Heart left ventricle (tissue), 16 donors: ENCODE measurements at regions of chr15 and their contacts with region 1.

Region 1: GRCh38 chr15:88897456-88898194 is 2.3 kb upstream of the HAPLN3 start:
- DNase-seq: peak; percentile 84 to 92 (median 90)
- ATAC-seq: peak; percentile 77 to 95 (median 88)
- H3K4me3 ChIP-seq: peak overlapping the region in 4 of 12 donors; percentile 5 to 28 (median 11)
- H3K27ac ChIP-seq: peak overlapping the region in 11 of 12 donors; percentile 68 to 87 (median 81)
- H3K4me1 ChIP-seq: peaks cover 5 to 72% (median 45%) of the 10 kb centered on the region in 12 donors
- H3K27me3 ChIP-seq: peaks cover 0 to 8% (median 0%) of the 10 kb centered on the region in 9 donors
- CTCF ChIP-seq: peak; percentile 47 to 88 (median 74)
- POLR2A ChIP-seq: no peak

Region 2: GRCh38 chr15:88657326-88658069 is 240.1 kb before region 1 on chr15:
- intact Hi-C with region 1: loop called in 2 of 10 experiments (anchors 10 kb)
- DNase-seq: no peak
- ATAC-seq: peak in 3 of 4 donors; percentile 54 to 55 (median 55)
- H3K4me3 ChIP-seq: no peak overlapping the region
- H3K27ac ChIP-seq: no peak overlapping the region
- H3K4me1 ChIP-seq: peaks cover 0 to 12% (median 2%) of the 10 kb centered on the region in 12 donors
- H3K27me3 ChIP-seq: no peaks in the 10 kb centered on the region
- CTCF ChIP-seq: peak; percentile 44 to 81 (median 70)
- POLR2A ChIP-seq: no peak

Region 3: DNA sequence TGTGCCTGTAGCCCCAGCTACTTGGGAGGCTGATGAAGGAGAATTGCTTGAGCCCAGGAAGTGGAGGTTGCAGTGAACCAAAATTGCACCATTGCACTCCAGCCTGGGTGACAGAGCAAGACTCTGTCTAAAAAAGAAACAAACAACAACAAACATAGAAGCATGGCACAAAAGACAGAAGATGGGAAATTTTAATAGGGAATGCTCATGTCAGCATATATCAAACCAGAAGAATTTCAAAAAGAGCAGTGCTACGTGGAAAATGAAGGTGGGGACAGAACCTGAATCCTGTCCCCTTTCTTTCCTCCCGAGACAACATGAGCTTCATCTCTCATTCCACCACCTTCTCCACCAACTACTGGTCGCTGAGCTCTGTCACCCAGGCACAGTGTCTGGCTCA is 61.8 kb after region 1 on chr15:
- intact Hi-C with region 1: no loop called
- DNase-seq: no peak
- ATAC-seq: no peak
- H3K4me3 ChIP-seq: no peak overlapping the region
- H3K27ac ChIP-seq: no peak overlapping the region
- H3K4me1 ChIP-seq: peaks cover 0 to 9% (median 5%) of the 10 kb centered on the region in 12 donors
- H3K27me3 ChIP-seq: no peaks in the 10 kb centered on the region
- CTCF ChIP-seq: no peak
- POLR2A ChIP-seq: no peak

Region 4: DNA sequence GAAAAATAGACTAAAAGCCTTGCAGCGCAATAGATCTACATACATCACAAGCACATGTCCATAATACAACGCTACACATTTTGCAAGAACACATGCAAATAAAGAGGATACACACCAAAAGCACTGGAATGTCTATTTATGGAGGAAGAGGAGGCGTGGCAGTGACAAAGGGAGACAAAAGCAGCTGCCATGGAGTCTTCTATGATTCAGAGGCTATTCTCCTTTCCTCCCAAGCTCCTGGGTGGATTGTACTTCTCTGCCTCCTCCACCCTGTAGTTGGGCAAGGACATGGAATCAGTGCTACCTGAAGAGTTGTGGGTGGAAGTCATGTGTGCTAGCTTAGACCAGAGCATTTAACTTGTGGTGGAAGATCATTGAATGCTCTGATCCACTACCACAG is 132.7 kb after region 1 on chr15:
- intact Hi-C with region 1: no loop called
- DNase-seq: no peak
- ATAC-seq: no peak
- H3K4me3 ChIP-seq: no peak overlapping the region
- H3K27ac ChIP-seq: no peak overlapping the region
- H3K4me1 ChIP-seq: no peaks in the 10 kb centered on the region
- H3K27me3 ChIP-seq: no peaks in the 10 kb centered on the region
- CTCF ChIP-seq: no peak
- POLR2A ChIP-seq: no peak